CD8-positive, alpha-beta T cell (primary cell): ENCODE measurements at regions of chr20 and their contacts with region 1.

Region 1: DNA sequence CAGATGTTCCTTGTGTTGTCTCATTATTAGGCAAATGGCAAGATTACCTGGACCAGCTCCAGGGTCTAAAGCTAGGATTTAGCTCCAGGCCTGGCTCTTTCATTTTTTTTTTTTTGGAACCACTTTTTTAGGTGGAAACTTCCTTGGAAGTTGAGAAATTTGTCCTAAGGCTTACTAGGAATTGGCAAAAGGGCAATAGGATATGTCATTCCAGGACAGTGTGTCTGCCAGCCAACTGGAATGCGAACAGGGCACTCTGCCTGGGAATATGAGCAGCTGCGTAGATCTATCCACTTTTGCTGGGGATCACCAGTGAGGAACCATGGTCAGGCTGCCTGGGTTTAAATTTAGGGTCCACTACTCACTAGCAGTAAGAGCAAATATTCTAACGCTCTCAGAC is 304.0 kb downstream of the TSHZ2 start:
- DNase-seq: no peak
- ATAC-seq: no peak
- H3K4me3 ChIP-seq: no peak overlapping the region
- H3K4me3 Mint-ChIP-seq: no peak overlapping the region
- H3K27ac ChIP-seq: no peak overlapping the region
- H3K27ac Mint-ChIP-seq: no peak overlapping the region
- H3K4me1 ChIP-seq: no peaks in the 10 kb centered on the region
- H3K4me1 Mint-ChIP-seq: no peaks in the 10 kb centered on the region
- H3K27me3 ChIP-seq: no peaks in the 10 kb centered on the region
- H3K27me3 Mint-ChIP-seq: peaks cover 8% of the 10 kb centered on the region
- CTCF ChIP-seq: no peak

Region 2: DNA sequence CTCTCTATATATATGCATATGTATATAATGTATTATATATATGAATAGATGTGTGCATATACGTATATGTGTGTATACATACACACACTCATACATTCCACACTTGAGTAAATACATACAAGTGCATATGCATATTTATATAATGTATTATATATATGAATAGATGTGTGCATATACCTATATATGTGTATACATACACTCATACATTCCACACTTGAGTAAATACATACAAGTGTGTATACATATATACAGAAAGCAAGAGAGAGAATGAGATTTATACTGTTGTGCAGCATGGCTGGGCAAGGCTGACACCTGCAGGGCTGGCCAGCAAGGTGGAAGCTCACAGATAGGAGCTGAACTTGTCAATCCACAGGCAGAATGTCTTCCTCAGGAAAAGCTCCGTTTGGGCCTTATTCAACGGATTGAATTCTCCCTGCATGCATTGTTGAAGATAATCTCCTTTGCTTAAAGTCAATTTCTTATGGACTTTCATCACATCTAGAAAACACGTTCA is 60.7 kb after region 1 on chr20:
- CTCF ChIA-PET with region 1: no interaction called
- POLR2A ChIA-PET with region 1: no interaction called
- intact Hi-C with region 1: loop called in 1 of 2 experiments (anchors 5 kb)
- DNase-seq: no peak
- ATAC-seq: no peak
- H3K4me3 ChIP-seq: no peak overlapping the region
- H3K4me3 Mint-ChIP-seq: no peak overlapping the region
- H3K27ac ChIP-seq: no peak overlapping the region
- H3K27ac Mint-ChIP-seq: no peak overlapping the region
- H3K4me1 ChIP-seq: no peaks in the 10 kb centered on the region
- H3K4me1 Mint-ChIP-seq: no peaks in the 10 kb centered on the region
- H3K27me3 ChIP-seq: no peaks in the 10 kb centered on the region
- H3K27me3 Mint-ChIP-seq: peaks cover 3% of the 10 kb centered on the region
- CTCF ChIP-seq: no peak